Transverse colon (tissue), 4 donors: ENCODE measurements at regions of chr20 and their contacts with region 1.

Region 1: DNA sequence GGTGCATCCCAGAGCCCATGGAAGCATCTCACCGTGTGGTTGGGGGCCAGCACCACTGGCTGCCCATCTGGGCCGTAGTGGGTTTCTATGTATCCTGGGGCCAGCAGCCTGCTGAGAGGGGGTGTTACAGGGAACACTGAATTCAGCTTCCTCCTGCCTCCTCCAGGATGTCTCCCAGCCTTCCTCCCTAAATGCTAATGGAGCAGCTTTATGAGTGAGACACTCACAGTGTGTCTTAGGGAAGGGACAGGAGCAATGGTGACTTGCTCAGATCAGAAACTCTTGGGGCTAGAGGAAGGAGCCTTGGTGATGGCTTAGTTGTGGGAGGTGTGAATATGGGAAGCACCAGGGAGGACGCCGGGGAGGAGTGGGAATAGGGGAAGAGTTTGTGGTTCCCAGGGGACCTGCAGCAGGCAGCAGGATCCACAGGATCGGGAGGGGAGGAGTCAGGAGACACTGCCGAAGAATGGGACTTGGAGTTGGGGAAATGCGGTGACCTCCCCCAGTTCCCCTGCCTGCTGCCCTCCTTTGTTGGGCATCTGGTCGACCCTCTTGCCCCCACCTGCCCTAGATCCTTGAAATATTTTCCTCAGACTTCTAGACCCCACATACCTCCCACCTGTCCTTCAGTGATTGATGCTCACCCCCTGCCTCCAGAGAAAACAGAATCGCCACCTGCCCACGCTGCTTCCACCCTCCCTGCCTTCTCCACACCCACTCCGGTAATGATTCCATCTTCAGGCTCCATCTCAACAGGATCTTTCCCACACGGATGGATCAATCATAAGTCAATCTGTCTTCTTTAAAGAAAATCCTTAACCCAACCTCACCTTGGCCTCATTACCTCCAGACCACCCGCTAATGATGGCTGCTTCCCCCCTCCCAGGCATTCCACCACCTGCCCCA is 6.6 kb downstream of the ADAM33 start:
- DNase-seq: no peak
- H3K4me3 ChIP-seq: no peak overlapping the region
- H3K27ac ChIP-seq: no peak overlapping the region
- H3K4me1 ChIP-seq: peaks cover 13 to 24% (median 18%) of the 10 kb centered on the region in 4 donors
- H3K27me3 ChIP-seq: peaks cover 60% of the 10 kb centered on the region
- CTCF ChIP-seq: no peak
- EP300 ChIP-seq: no peak
- POLR2A ChIP-seq: no peak

Region 2: DNA sequence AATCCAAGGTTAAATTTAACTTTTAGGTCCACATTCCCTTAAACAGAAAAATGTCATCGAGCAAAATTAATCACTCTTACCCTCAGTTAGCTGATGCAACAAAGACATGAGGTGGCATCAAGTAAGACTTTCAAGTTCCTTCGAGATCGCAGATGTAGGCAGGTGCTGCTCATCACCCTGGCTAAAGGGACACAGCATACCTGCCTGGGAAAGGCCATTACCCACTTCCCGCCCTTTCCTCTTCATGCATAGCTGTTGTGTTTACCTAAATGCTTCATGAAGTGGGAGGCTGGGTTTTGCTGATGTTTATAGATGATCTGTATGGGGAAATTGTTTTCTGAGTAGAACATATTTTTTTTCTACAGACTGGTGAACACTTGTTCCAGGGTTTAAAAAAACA is 79.7 kb before region 1 on chr20:
- in situ Hi-C with region 1: no loop called
- intact Hi-C with region 1: no loop called
- DNase-seq: no peak
- H3K4me3 ChIP-seq: no peak overlapping the region
- H3K27ac ChIP-seq: no peak overlapping the region
- H3K4me1 ChIP-seq: no peaks in the 10 kb centered on the region
- H3K27me3 ChIP-seq: no peaks in the 10 kb centered on the region
- CTCF ChIP-seq: no peak
- EP300 ChIP-seq: no peak
- POLR2A ChIP-seq: no peak

Region 3: GRCh38 chr20:3651204-3651962 is 23.9 kb before region 1 on chr20:
- in situ Hi-C with region 1: no loop called
- intact Hi-C with region 1: no loop called
- DNase-seq: no peak
- H3K4me3 ChIP-seq: no peak overlapping the region
- H3K27ac ChIP-seq: no peak overlapping the region
- H3K4me1 ChIP-seq: no peaks in the 10 kb centered on the region
- H3K27me3 ChIP-seq: no peaks in the 10 kb centered on the region
- CTCF ChIP-seq: no peak
- EP300 ChIP-seq: no peak
- POLR2A ChIP-seq: no peak

Region 4: DNA sequence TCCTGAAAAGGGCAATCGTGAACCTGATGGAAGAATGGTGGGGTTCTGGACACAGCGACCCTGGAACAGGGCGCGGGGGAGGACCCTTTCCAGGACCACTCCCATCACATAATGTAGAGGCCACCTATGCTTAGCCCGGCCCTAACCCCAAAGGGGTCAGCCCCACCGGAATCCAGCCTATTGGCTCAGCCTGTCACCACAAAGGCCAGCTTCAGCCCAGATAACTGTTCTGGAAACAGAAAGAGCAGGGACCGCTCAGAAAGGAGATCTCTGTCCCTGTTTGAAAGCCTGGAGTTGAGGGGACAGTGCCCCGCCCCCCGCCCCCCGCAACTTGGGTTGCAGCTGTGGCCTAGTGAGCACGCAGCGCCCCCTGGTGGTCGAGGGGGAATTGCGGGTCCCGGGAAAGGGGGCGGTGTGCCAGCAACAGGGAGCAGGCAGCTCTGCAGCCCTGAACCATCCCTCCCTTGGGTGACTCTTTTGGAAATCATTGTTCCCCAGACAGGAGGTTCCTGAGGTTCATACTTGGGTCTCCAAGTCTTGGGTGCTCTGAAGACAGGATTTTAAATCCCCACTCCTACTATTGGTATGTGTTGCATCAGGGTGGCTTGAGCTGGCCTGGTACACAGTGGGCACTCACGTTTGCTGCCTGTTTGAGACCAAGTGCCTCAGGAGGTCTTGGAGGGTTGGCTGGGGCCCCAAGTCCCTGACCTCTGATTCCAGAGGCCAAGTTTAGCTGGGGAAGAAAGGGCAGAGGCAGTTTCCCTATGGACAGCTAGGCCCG is 35.6 kb after region 1 on chr20:
- in situ Hi-C with region 1: no loop called
- intact Hi-C with region 1: loop called (anchors 1 kb)
- DNase-seq: peak; percentile 72
- H3K4me3 ChIP-seq: no peak overlapping the region
- H3K27ac ChIP-seq: peak overlapping the region in 2 of 4 donors; percentile 1 to 36
- H3K4me1 ChIP-seq: peaks cover 0 to 3% (median 0%) of the 10 kb centered on the region in 4 donors
- H3K27me3 ChIP-seq: no peaks in the 10 kb centered on the region
- CTCF ChIP-seq: peak; percentile 89 to 97 (median 95)
- EP300 ChIP-seq: no peak
- POLR2A ChIP-seq: no peak

Region 5: DNA sequence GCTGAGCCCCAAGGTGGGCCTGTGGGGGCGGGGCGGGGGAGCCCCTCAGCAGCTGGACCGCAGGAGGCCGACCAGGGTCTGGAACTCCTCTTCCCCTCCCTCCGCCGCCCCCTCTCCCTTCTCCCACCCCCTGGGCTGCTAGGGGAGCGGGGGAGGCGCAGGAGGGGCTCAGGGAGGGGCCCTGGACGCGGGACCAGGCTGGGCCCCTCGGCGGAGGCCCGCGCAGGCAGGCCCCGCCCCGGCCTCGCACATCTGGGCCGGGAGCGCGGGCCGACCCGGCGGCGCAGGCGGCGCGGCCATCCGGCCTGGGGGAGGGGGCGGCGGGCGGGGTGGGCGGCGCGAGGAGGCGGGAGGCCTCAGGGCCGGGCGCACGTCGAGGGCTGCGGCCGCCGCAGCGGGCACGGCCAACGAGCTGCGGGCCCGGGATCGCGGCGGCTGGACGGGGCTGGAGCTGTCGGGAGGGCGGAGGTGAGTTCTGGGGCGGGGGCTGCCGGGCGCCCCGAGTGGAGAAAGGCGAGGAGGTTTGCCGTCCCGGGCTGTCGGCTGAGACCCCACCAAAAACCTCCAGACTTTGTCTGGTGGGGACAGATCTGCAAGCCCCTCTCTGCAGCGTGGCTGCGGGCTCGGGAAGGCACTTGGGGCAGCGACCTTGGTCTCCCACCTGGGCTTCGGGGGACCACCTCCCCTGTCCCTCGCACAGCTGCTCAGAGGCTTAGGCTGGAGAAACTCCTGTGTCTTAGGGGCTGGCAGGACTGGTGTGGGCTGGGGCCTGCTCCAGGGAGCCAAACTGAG is 57.3 kb after region 1 on chr20 and contains the start of gene HSPA12B:
- in situ Hi-C with region 1: no loop called
- intact Hi-C with region 1: no loop called
- DNase-seq: no peak
- H3K4me3 ChIP-seq: peak within 1 kb of the TSS in 2 of 4 donors; percentile 6 to 34
- H3K27ac ChIP-seq: peak within 1 kb of the TSS; percentile 11 to 53 (median 28)
- H3K4me1 ChIP-seq: peaks cover 0 to 13% (median 8%) of the 10 kb centered on the region in 4 donors
- H3K27me3 ChIP-seq: peaks cover 27% of the 10 kb centered on the region
- CTCF ChIP-seq: no peak
- EP300 ChIP-seq: no peak
- POLR2A ChIP-seq: no peak
- total RNA-seq, gene HSPA12B: 0.75 to 4.1 (median 2.7) TPM